PC-9 (cell line): ENCODE measurements at regions of chr1 and their contacts with region 1.

Region 1: GRCh38 chr1:233790662-233791375 is 113.7 kb upstream of the SLC35F3 start:
- DNase-seq: peak; percentile 34 to 43
- H3K4me3 ChIP-seq: no peak overlapping the region
- H3K27ac ChIP-seq: no peak overlapping the region
- H3K4me1 ChIP-seq: 0 out of 2 replicates have a peak, but pooled peaks cover 7% of the 10 kb centered on the region
- H3K27me3 ChIP-seq: no peaks in the 10 kb centered on the region
- CTCF ChIP-seq: peak; percentile 97

Region 2: GRCh38 chr1:232737917-232738316 is 1052.9 kb before region 1 on chr1:
- CTCF ChIA-PET with region 1: no interaction called
- POLR2A ChIA-PET with region 1: no interaction called
- intact Hi-C with region 1: no loop called
- DNase-seq: no peak
- H3K4me3 ChIP-seq: no peak overlapping the region
- H3K27ac ChIP-seq: no peak overlapping the region
- H3K4me1 ChIP-seq: no peaks in the 10 kb centered on the region
- H3K27me3 ChIP-seq: peaks cover 16% of the 10 kb centered on the region
- CTCF ChIP-seq: no peak

Region 3: DNA sequence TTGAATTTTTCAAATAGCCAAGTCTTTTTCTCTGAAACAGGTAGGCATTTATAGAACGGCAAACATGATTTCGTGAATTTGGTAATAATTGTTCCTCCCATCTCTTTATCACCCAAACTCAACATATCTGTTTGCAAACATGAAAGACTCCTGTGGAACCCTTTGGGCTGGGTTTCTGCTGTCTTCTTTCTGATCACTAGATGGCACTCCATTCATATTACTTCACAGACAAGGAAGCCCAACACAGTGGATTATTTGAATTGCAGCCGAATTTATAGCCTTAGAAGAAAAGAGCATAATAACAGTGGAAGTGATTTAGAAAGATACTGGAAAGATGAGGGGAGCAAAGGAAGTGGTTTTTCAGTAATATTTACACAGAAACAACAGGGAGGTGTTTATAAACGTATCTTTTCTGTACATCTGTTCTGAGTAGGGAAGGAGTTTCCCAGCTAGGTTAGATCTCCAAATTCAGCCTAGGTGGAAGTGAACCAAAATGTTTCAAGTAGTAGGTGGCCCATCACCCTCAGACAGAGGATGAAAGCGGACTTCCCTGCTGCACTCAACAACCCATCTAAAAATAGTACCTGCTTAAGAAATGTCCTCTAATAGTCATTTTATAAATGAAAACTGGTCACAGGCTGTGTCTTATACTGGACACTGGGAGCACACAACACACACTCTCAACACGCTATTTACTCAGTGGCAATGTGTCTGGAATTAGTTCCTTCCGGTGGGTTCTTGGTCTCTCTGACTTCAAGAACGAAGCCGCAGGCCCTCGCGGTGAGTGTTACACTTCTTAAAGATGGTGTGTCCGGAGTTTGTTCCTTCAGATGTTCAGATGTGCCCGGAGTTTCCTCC is 395.7 kb before region 1 on chr1:
- CTCF ChIA-PET with region 1: no interaction called
- POLR2A ChIA-PET with region 1: no interaction called
- intact Hi-C with region 1: loop called (anchors 1 kb)
- DNase-seq: peak; percentile 30 to 60
- H3K4me3 ChIP-seq: no peak overlapping the region
- H3K27ac ChIP-seq: no peak overlapping the region
- H3K4me1 ChIP-seq: no peaks in the 10 kb centered on the region
- H3K27me3 ChIP-seq: no peaks in the 10 kb centered on the region
- CTCF ChIP-seq: peak; percentile 89

Region 4: DNA sequence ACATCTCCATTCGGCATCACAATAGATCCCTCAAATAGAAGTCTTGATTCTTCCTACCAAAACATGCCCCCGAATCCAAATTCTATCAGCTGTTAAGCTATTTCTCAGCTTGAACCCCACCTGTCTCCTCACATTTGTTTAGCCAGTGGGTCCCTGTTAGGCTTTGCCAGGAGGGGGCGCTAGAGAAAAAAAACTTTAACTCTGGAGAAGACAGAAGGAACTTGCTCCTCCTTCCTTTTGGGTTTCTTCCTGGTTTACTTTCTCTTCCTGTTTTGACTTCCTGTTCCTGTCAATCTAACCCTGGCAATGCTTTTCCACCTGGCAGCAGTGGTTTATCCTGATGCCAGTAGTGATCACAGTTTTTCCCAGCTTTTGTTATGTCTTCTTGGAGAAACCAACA is 272.5 kb before region 1 on chr1:
- CTCF ChIA-PET with region 1: interaction called, 11 read pairs
- POLR2A ChIA-PET with region 1: no interaction called
- intact Hi-C with region 1: loop called (anchors 5 kb)
- DNase-seq: peak; percentile 25 to 50
- H3K4me3 ChIP-seq: no peak overlapping the region
- H3K27ac ChIP-seq: no peak overlapping the region
- H3K4me1 ChIP-seq: peaks cover 16% of the 10 kb centered on the region
- H3K27me3 ChIP-seq: no peaks in the 10 kb centered on the region
- CTCF ChIP-seq: peak; percentile 81

Region 5: DNA sequence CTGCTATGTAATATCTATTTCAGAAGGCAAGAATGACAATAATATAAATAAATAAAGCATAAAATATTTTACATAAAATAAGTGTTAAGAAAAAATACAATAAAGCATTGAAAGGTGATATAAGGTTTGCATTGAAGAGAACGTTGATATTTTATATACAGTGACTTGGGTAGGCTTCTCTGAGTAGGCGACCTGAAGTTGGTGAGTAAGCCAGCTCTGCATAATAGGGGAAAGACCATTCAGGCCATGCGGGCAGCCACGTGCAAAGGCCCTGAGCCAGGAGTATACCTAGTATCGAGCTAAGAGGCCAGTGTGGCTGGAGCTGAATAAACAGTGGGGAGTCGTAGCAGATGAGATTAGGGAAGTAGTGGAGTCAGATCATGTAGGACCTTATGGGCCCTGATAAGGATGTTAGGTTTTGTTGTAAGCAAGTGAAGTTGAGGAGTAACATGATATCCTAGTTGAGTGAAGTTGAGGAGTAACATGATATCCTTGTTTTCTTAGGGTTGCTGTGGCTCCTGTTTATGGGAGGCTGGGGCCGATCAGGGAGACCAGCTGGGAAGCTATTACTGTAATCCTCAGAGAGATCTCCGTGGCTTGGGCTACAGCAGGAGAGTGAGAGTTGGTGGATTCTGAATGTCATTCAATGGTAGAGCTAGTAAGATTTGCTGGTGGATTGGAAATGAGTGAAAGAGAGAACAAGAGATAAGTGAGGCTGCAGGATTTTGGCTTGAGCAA is 154.9 kb before region 1 on chr1:
- CTCF ChIA-PET with region 1: no interaction called
- POLR2A ChIA-PET with region 1: no interaction called
- intact Hi-C with region 1: loop called (anchors 1 kb)
- DNase-seq: peak; percentile 88 to 98
- H3K4me3 ChIP-seq: no peak overlapping the region; the same call in 1 of the 2 replicates
- H3K27ac ChIP-seq: peak overlapping the region; percentile 64
- H3K4me1 ChIP-seq: peaks cover 34% of the 10 kb centered on the region
- H3K27me3 ChIP-seq: no peaks in the 10 kb centered on the region
- CTCF ChIP-seq: no peak

Region 6: GRCh38 chr1:233668725-233669294 is 122.0 kb before region 1 on chr1:
- CTCF ChIA-PET with region 1: no interaction called
- POLR2A ChIA-PET with region 1: no interaction called
- intact Hi-C with region 1: loop called (anchors 2 kb)
- DNase-seq: peak; percentile 43 to 89
- H3K4me3 ChIP-seq: no peak overlapping the region
- H3K27ac ChIP-seq: peak overlapping the region; percentile 72
- H3K4me1 ChIP-seq: peaks cover 24% of the 10 kb centered on the region
- H3K27me3 ChIP-seq: no peaks in the 10 kb centered on the region
- CTCF ChIP-seq: no peak

Region 7: DNA sequence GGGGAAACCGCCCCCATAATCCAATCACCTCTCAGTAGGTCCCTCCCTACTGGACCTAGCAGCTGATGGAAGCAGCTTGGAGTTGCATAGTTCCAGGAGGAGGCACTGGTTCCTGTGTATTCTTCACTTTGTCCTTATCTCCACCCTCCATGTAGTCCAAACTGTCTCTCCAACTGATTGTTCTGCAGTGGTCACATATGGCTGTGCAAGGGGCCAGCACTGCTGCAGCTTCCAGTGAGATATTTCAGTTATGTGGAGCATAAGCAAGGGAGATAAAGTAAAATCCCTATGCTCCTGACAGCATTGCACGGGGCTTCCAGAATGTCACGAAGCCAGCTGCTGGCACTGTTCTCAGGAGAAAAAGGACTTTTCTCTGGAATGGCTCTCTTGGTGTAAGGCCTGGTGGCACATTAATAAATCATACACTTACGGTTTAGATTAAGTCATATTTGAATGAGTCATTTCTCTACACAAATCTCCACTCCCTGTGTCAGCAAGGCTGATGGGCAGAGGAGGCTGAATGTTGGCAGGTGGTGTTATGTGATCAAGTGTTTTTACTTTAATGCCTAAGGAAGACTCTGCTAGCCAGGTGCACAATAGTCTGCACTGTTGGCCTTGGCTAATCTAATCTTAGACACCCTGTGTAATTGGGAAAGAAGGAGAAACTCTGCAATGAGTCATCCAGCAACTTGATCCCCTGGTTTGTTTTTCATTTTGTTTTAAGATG is 83.5 kb before region 1 on chr1:
- CTCF ChIA-PET with region 1: no interaction called
- POLR2A ChIA-PET with region 1: no interaction called
- intact Hi-C with region 1: loop called (anchors 1 kb)
- DNase-seq: peak; percentile 81 to 99
- H3K4me3 ChIP-seq: peak overlapping the region; percentile 26; the same call in 1 of the 2 replicates
- H3K27ac ChIP-seq: peak overlapping the region; percentile 84
- H3K4me1 ChIP-seq: peaks cover 67% of the 10 kb centered on the region
- H3K27me3 ChIP-seq: no peaks in the 10 kb centered on the region
- CTCF ChIP-seq: no peak

Region 8: DNA sequence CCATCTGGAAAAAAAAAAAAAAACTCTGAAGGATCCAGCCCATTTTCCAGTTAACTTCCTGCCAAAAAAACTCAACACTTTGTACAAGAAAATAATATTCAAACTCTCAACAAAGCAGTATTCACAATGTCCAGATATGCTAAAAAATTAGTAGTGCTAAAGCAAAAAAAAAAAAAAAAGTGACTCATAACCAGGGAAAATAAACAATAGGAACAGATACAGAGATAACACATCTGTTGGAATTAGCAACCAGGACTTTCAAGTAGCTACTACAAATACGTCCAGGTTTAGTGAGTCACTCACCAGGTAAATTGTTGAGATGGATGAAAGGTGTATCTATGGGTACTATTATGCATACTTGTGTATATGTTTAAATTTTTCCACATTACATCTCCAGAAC is 31.2 kb before region 1 on chr1:
- CTCF ChIA-PET with region 1: no interaction called
- POLR2A ChIA-PET with region 1: no interaction called
- intact Hi-C with region 1: no loop called
- DNase-seq: peak; percentile 2 to 79
- H3K4me3 ChIP-seq: no peak overlapping the region
- H3K27ac ChIP-seq: no peak overlapping the region
- H3K4me1 ChIP-seq: peaks cover 12% of the 10 kb centered on the region
- H3K27me3 ChIP-seq: no peaks in the 10 kb centered on the region
- CTCF ChIP-seq: no peak

Region 9: DNA sequence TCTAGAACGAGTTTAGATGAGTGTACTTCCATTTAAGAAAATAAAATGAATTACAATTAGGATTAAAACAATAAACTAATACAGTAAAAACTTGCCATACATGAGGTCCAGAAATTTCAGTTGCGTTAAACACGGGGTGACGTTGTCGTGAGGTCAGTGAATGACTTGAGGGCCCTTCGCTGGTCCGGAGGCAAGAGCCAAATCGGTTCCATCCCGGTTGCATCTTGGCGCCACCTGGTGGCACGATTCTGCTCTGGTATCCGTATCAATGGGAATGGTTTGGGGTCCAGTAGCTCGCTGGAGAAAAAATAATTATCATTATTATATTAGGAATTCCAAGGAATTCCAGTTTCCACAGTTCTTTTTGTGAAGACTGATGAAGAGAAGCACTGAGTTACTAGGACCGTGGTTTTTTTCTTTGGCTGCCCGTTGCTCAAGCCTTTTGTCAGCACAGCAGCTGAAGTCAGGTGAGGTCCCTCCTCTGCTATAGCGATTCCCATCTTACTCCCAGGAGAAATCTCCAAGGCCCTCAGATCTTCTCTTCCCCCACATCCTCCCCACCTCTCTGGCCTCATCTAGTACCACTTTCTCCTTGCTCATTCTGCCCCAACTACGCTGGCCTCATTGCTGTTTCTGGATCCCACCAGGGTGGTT is 275.1 kb after region 1 on chr1:
- CTCF ChIA-PET with region 1: interaction called, 10 read pairs
- POLR2A ChIA-PET with region 1: no interaction called
- intact Hi-C with region 1: loop called (anchors 1 kb)
- DNase-seq: peak in 1 of 2 experiments; percentile 75
- H3K4me3 ChIP-seq: no peak overlapping the region
- H3K27ac ChIP-seq: no peak overlapping the region
- H3K4me1 ChIP-seq: no peaks in the 10 kb centered on the region
- H3K27me3 ChIP-seq: no peaks in the 10 kb centered on the region
- CTCF ChIP-seq: peak; percentile 83